Thyroid gland (tissue), 4 donors: ENCODE measurements at regions of chr15 and their contacts with region 1.

Region 1: DNA sequence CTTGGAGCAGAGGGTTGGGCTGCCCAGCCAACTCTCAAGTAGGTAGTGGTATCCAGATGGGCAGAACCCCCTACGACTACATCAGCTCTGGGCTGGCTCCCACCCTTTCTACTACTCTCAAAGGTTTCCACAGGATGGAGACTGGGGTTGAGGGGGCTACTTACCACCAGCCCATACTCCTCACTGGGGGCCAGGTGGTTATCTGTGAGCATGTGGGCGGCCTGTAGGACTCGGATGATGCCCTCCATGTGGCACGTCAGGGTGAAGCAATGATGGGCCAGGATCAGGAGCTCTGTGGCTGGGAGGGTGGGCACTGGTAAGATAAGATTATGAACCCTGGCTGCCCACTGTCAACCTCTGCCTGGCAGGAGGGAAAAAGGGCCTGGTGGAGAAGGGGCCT is 33.4 kb downstream of the EIF3J start:
- DNase-seq: no peak
- H3K4me3 ChIP-seq: no peak overlapping the region
- H3K27ac ChIP-seq: no peak overlapping the region
- H3K4me1 ChIP-seq: no peaks in the 10 kb centered on the region
- H3K27me3 ChIP-seq: no peaks in the 10 kb centered on the region
- CTCF ChIP-seq: no peak
- POLR2A ChIP-seq: no peak

Region 2: GRCh38 chr15:44087572-44088465 is 482.5 kb before region 1 on chr15:
- intact Hi-C with region 1: no loop called
- DNase-seq: no peak
- H3K4me3 ChIP-seq: no peak overlapping the region
- H3K27ac ChIP-seq: no peak overlapping the region
- H3K4me1 ChIP-seq: no peaks in the 10 kb centered on the region
- H3K27me3 ChIP-seq: no peaks in the 10 kb centered on the region
- CTCF ChIP-seq: no peak
- POLR2A ChIP-seq: no peak

Region 3: DNA sequence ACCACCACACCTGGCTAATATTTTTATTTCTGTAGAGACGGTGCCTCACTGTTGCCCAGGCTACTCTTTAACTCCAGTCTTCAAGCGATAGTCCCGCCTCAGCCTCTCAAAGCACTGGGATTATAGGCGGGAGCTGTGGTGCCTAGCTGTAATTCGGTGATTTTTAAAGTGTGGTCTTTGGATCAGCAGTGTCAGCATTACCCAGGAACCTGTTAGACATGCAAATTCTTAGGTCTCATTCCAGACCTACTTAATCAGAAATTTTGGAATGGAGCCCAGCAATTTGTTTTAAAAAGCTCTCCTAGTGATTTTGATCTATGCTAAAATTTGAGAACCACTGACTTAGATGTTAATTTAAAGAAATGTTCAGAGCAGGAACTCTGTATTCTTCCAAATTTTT is 230.0 kb before region 1 on chr15:
- intact Hi-C with region 1: no loop called
- DNase-seq: peak; percentile 84 to 89
- H3K4me3 ChIP-seq: no peak overlapping the region
- H3K27ac ChIP-seq: peak overlapping the region; percentile 57 to 75 (median 73)
- H3K4me1 ChIP-seq: peaks cover 0 to 6% of the 10 kb centered on the region in 2 donors
- H3K27me3 ChIP-seq: no peaks in the 10 kb centered on the region
- CTCF ChIP-seq: no peak
- POLR2A ChIP-seq: peak in 1 of 2 donors; percentile 20

Region 4: GRCh38 chr15:44620081-44620480 is 49.7 kb after region 1 on chr15:
- intact Hi-C with region 1: no loop called
- DNase-seq: no peak
- H3K4me3 ChIP-seq: no peak overlapping the region
- H3K27ac ChIP-seq: no peak overlapping the region
- H3K4me1 ChIP-seq: no peaks in the 10 kb centered on the region
- H3K27me3 ChIP-seq: no peaks in the 10 kb centered on the region
- CTCF ChIP-seq: no peak
- POLR2A ChIP-seq: no peak

Region 5: GRCh38 chr15:44738340-44738984 is 168.1 kb after region 1 on chr15:
- intact Hi-C with region 1: loop called (anchors 10 kb)
- DNase-seq: no peak
- H3K4me3 ChIP-seq: no peak overlapping the region
- H3K27ac ChIP-seq: no peak overlapping the region
- H3K4me1 ChIP-seq: no peaks in the 10 kb centered on the region
- H3K27me3 ChIP-seq: no peaks in the 10 kb centered on the region
- CTCF ChIP-seq: peak; percentile 30 to 91 (median 64)
- POLR2A ChIP-seq: no peak